Posterior cingulate gyrus (tissue), 11 donors: ENCODE measurements at regions of chr17 and their contacts with region 1.

Region 1: GRCh38 chr17:59202320-59202719 is 7.5 kb upstream of the SMG8 start:
- DNase-seq: no peak

Region 2: DNA sequence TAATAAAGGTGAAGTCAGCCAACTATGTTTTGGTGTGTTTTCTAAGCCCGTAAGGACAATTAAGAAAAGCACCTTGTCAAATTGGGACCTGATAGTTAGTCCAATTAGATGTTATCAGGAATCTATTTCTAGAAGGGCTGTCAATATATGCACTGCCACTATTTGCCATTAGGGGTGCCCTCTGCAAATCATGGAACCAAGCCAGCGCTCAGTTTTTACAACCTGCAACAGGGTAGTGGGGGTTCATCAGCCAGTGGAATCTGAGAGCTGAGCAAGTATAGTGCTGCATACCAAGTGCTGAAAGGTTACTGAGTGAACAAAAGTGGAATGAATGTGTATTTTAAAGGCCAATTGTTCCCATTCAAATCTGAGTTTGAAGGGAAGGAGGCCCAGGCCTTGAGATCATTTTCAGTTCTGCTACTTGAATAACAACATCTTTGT is 36.4 kb before region 1 on chr17:
- intact Hi-C with region 1: loop called (anchors 5 kb)
- DNase-seq: peak in 7 of 10 donors; percentile 19 to 78 (median 49)